SK-MEL-5 (cell line): ENCODE measurements at regions of chr7 and their contacts with region 1.

Region 1: GRCh38 chr7:81725812-81726127 is 44.1 kb downstream of the HGF start:
- DNase-seq: no peak

Region 2: GRCh38 chr7:81499262-81500116 is 226.3 kb before region 1 on chr7:
- in situ Hi-C with region 1: loop called (anchors 25 kb)
- DNase-seq: peak; percentile 90